Activated CD4-positive, alpha-beta memory T cell treated with anti-CD3 and anti-CD28 coated beads, Interleukin-2, amount 10 ng/mL, durations not matched to agents 7 days and 5 days (primary cell): ENCODE measurements at regions of chr6 and their contacts with region 1.

Region 1: DNA sequence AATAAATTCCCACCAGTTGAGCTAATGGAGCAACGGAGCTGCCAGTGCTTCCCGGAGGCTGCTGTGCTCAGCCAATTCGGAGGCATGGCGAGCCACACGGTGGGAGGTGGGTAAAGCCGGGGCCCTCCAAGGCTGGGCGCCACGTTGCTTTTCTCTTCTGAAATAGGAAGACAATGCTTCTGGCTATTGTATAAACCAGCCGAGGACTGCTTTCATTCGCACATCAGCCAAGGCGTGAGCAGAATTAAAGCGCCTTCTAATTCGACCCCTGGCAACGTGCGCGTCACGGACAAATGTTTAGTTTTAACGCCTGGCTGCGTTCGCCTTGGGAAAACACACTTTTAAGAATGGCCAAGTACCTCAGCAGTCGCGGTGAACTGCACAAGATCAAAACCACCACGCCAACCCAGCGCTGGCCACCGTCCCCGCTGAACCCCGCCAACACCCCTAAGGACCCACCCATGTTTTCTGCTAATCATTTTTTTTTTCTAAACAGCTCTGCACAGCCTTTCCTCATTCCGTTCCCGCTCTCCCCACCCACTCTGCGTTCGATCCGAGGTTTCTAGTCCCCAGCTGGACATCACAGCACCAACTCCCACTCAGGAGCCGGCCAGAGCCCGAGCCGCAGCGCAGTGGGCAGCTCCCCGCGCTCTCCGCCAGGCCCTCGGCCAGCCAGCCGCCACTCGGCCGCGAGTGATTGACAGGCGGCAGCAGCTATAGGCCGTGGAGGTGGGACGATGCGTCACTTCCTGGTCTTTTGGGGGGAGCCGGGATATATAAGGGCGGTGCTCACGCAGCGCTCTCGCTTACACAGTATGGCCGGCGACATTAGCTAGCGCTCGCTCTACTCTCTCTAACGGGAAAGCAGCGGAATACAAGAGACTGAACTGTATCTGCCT is at the start of gene AMD1:
- DNase-seq: peak; percentile 94
- H3K4me3 Mint-ChIP-seq: peak within 1 kb of the TSS; percentile 90
- H3K27ac Mint-ChIP-seq: peak within 1 kb of the TSS; percentile 95
- H3K4me1 Mint-ChIP-seq: peaks cover 27% of the 10 kb centered on the region
- H3K27me3 Mint-ChIP-seq: no peaks in the 10 kb centered on the region
- total RNA-seq, gene AMD1: 71.0 to 73.2 TPM

Region 2: GRCh38 chr6:110682460-110682853 is 191.8 kb before region 1 on chr6:
- CTCF ChIA-PET with region 1: interaction called, 67 read pairs
- POLR2A ChIA-PET with region 1: interaction called, 24 read pairs
- DNase-seq: peak; percentile 65
- H3K4me3 Mint-ChIP-seq: no peak overlapping the region
- H3K27ac Mint-ChIP-seq: peak overlapping the region; percentile 42
- H3K4me1 Mint-ChIP-seq: peaks cover 19% of the 10 kb centered on the region
- H3K27me3 Mint-ChIP-seq: no peaks in the 10 kb centered on the region

Region 3: DNA sequence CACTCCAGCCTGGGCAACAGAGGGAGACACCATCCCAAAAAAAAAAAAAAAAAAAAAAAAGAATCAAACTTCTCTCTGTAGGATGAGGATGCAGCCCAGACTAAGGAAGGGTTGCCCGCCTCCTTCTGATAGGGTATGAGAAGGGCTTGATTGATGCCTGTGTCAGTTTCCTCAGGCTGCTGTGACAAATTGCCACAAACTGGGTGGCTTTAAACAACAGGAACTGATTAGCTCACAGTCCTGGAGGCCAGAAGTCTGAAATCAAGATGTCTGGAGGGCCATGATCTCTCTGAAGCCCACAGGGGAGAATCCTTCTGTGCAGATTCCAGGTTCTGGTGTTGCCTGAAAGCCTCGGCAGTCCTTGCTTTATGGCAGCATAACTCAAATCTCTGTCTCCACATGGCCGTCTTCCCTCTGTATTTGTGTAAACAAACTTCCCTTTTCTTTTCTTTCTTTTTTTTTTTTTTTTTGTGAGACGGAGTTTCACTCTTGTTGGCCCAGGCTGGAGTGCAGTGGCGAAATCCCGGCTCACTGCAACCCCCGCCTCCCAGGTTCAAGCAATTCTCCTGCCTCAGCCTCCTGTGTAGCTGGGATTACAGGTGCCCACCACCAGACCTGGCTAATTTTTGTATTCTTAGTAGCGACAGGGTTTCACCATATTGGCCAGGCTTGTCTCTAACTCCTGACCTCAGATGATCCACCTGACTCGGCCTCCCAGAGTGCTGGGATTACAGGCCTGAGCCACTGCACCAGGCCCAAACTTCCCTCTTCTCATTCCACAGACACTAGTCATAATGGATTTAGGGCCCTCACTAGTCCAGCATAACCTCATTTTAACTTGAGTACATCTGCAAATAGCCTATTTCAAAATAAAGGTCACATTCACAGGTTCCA is 47.7 kb before region 1 on chr6:
- CTCF ChIA-PET with region 1: interaction called, 5 read pairs
- POLR2A ChIA-PET with region 1: interaction called, 813 read pairs
- DNase-seq: no peak
- H3K4me3 Mint-ChIP-seq: no peak overlapping the region
- H3K27ac Mint-ChIP-seq: no peak overlapping the region
- H3K4me1 Mint-ChIP-seq: peaks cover 6% of the 10 kb centered on the region
- H3K27me3 Mint-ChIP-seq: peaks cover 3% of the 10 kb centered on the region

Region 4: DNA sequence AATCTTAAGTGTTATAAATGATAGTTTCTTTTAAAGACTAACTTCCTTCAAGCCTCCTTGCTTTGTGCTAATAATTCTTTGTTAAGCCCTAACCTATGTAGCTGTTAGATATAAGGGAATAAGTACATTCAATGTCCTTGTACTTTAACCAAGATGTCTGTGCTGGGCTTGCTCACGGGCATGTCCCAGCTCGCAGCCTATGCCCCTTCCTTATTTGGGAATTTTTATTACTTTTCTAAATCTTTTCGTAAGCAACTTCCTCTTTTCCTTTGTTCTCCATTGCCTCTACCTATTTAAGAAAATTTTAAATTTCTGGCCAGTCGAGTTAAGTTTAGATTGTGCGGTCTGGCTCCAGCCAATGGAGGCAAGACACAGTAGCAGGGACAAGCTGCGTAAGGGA is 33.0 kb before region 1 on chr6:
- CTCF ChIA-PET with region 1: no interaction called
- POLR2A ChIA-PET with region 1: no interaction called
- DNase-seq: no peak
- H3K4me3 Mint-ChIP-seq: no peak overlapping the region
- H3K27ac Mint-ChIP-seq: no peak overlapping the region
- H3K4me1 Mint-ChIP-seq: no peaks in the 10 kb centered on the region
- H3K27me3 Mint-ChIP-seq: no peaks in the 10 kb centered on the region

Region 5: DNA sequence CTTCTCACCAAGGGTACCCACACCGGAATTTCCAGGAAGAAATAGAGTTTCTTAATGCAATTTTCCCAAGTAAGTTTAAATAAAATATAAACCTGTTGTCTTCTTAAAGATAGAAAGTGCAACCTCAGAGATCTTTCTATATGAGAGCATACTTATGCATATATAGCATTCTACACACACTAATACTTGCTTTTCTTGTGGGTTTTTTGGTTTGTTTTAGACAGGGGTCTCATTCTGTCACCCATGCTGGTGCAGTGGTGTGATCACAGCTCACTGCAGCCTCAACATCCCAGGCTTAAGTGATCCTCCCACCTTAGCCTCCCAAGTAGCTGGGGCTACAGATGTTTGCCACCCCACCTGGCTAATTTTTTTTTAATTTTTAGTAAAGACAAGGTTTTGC is 16.1 kb after region 1 on chr6:
- CTCF ChIA-PET with region 1: interaction called, 4 read pairs
- POLR2A ChIA-PET with region 1: interaction called, 68 read pairs
- DNase-seq: no peak
- H3K4me3 Mint-ChIP-seq: no peak overlapping the region
- H3K27ac Mint-ChIP-seq: no peak overlapping the region
- H3K4me1 Mint-ChIP-seq: peaks cover 23% of the 10 kb centered on the region
- H3K27me3 Mint-ChIP-seq: no peaks in the 10 kb centered on the region

Region 6: GRCh38 chr6:110958329-110959192 is 84.3 kb after region 1 on chr6 and contains the start of gene GTF3C6:
- CTCF ChIA-PET with region 1: interaction called, 12 read pairs
- POLR2A ChIA-PET with region 1: interaction called, 127 read pairs
- DNase-seq: peak; percentile 95
- H3K4me3 Mint-ChIP-seq: peak within 1 kb of the TSS; percentile 95
- H3K27ac Mint-ChIP-seq: peak within 1 kb of the TSS; percentile 95
- H3K4me1 Mint-ChIP-seq: peaks cover 19% of the 10 kb centered on the region
- H3K27me3 Mint-ChIP-seq: no peaks in the 10 kb centered on the region
- total RNA-seq, gene GTF3C6: 83.2 to 93.3 TPM